IMR-90 (cell line): ENCODE measurements at regions of chr3 and their contacts with region 1.

Region 1: GRCh38 chr3:101195951-101196713 is 124.2 kb downstream of the IMPG2 start:
- DNase-seq: peak; percentile 72
- ATAC-seq: peak; percentile 71
- H3K4me3 ChIP-seq: no peak overlapping the region
- H3K27ac ChIP-seq: no peak overlapping the region
- H3K4me1 ChIP-seq: no peaks in the 10 kb centered on the region; the same call in 1 of the 2 replicates
- H3K27me3 ChIP-seq: 0 out of 2 replicates have a peak, but pooled peaks cover 1% of the 10 kb centered on the region
- CTCF ChIP-seq: peak; percentile 81
- POLR2A ChIP-seq: 0 out of 2 replicates have a peak, but pooled peaks have one; percentile 27
- RAD21 ChIP-seq: peak; percentile 87

Region 2: GRCh38 chr3:100316641-100317069 is 879.5 kb before region 1 on chr3:
- CTCF ChIA-PET with region 1: no interaction called
- POLR2A ChIA-PET with region 1: no interaction called
- dilution Hi-C with region 1: no loop called
- in situ Hi-C with region 1: no loop called
- intact Hi-C with region 1: loop called (anchors 10 kb)
- DNase-seq: peak; percentile 68
- ATAC-seq: peak; percentile 94
- H3K4me3 ChIP-seq: no peak overlapping the region
- H3K27ac ChIP-seq: peak overlapping the region; percentile 45; the same call in 1 of the 2 replicates
- H3K4me1 ChIP-seq: 0 out of 2 replicates have a peak, but pooled peaks cover 2% of the 10 kb centered on the region
- H3K27me3 ChIP-seq: no peaks in the 10 kb centered on the region
- CTCF ChIP-seq: peak; percentile 70
- POLR2A ChIP-seq: no peak
- RAD21 ChIP-seq: peak; percentile 74

Region 3: DNA sequence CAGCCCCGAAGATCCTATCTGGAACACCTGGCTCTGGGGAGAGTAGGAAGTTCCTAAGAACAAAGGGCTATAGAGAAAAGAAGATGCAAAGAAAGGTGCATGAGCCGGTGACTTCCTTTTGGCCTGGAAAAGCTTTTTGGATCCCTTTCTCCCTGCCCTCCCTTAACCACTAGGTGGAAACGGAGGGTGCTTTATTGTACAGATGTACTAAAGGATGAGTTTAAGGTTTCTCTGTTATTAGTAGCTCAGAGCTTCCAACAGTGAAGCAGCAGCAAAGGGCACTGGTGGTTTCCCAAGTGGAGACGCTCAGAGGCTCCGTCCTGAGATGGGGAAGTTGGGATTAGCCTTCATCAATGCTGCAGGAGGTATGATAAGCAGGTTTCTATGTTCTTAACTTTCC is 592.7 kb before region 1 on chr3:
- CTCF ChIA-PET with region 1: no interaction called
- POLR2A ChIA-PET with region 1: no interaction called
- dilution Hi-C with region 1: no loop called
- in situ Hi-C with region 1: no loop called
- intact Hi-C with region 1: loop called (anchors 5 kb)
- DNase-seq: peak; percentile 54
- ATAC-seq: peak; percentile 82
- H3K4me3 ChIP-seq: no peak overlapping the region
- H3K27ac ChIP-seq: no peak overlapping the region
- H3K4me1 ChIP-seq: no peaks in the 10 kb centered on the region; the same call in 1 of the 2 replicates
- H3K27me3 ChIP-seq: peaks cover under 1% of the 10 kb centered on the region; the same call in 1 of the 2 replicates
- CTCF ChIP-seq: peak; percentile 52
- POLR2A ChIP-seq: no peak
- RAD21 ChIP-seq: peak; percentile 55

Region 4: GRCh38 chr3:100754563-100755334 is 441.4 kb before region 1 on chr3:
- CTCF ChIA-PET with region 1: no interaction called
- POLR2A ChIA-PET with region 1: no interaction called
- dilution Hi-C with region 1: no loop called
- in situ Hi-C with region 1: no loop called
- intact Hi-C with region 1: loop called (anchors 5 kb)
- DNase-seq: no peak
- ATAC-seq: no peak
- H3K4me3 ChIP-seq: no peak overlapping the region
- H3K27ac ChIP-seq: no peak overlapping the region
- H3K4me1 ChIP-seq: peaks cover 2% of the 10 kb centered on the region; the same call in 1 of the 2 replicates
- H3K27me3 ChIP-seq: no peaks in the 10 kb centered on the region
- CTCF ChIP-seq: 0 out of 2 replicates have a peak, but pooled peaks have one; percentile 16
- POLR2A ChIP-seq: no peak
- RAD21 ChIP-seq: peak; percentile 39

Region 5: DNA sequence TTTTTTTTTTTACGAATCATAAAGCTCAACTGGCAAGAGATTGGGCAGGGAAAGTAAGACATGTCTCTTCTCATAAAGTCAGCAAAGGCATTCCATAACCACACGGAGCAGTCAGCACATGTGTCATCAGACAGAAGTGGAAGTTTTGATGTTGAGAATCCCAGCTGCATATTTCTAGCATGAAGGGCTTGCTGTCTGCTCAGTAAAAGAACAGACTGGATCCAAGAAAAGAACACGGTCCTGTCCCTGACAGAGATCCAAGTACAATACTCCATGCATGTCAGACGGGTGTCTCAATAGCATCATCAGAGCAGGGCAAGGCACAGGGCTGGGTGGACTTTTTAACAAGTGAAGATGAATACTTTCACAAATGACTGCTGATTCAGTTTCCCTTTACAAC is 241.1 kb before region 1 on chr3:
- CTCF ChIA-PET with region 1: no interaction called
- POLR2A ChIA-PET with region 1: no interaction called
- dilution Hi-C with region 1: no loop called
- in situ Hi-C with region 1: no loop called
- intact Hi-C with region 1: loop called (anchors 5 kb)
- DNase-seq: peak; percentile 97
- ATAC-seq: peak; percentile 97
- H3K4me3 ChIP-seq: peak overlapping the region; percentile 25; the same call in 1 of the 2 replicates
- H3K27ac ChIP-seq: peak overlapping the region; percentile 14; the same call in 1 of the 2 replicates
- H3K4me1 ChIP-seq: peaks cover 1% of the 10 kb centered on the region; the same call in 1 of the 2 replicates
- H3K27me3 ChIP-seq: no peaks in the 10 kb centered on the region
- CTCF ChIP-seq: 0 out of 2 replicates have a peak, but pooled peaks have one; percentile 4
- POLR2A ChIP-seq: no peak
- RAD21 ChIP-seq: no peak; the same call in 1 of the 2 replicates

Region 6: DNA sequence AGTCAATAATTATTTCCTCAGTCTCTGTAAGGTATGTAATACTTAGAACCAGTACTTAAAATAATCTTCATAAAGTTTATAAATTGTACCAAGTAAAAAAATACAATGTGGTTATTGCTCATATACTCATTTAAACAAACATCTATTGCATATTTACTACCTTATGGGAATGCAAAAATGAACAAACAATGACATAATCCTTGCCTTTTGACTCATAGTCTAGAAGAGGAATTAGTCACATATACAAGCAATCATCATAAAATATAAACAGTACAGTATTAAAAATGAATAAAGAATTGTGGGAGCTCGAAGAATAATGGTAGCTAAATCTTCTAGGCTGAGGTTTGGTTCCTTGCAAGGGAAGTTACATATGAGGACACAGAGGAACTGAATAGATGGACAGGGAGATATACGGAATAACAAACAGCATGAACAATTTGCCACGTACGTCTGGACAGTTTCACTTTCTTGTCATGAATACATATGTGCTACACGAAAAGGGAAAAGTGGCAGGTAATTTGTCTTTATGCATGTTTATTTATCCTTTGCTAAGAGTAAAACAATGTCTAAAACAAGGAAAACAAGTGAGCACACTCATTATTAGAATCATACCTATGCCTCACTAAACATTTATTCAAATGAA is 107.1 kb after region 1 on chr3:
- CTCF ChIA-PET with region 1: no interaction called
- POLR2A ChIA-PET with region 1: no interaction called
- dilution Hi-C with region 1: no loop called
- in situ Hi-C with region 1: no loop called
- intact Hi-C with region 1: no loop called
- DNase-seq: peak; percentile 91
- ATAC-seq: peak; percentile 85
- H3K4me3 ChIP-seq: peak overlapping the region; percentile 40; the same call in 1 of the 2 replicates
- H3K27ac ChIP-seq: peak overlapping the region; percentile 69; the same call in 1 of the 2 replicates
- H3K4me1 ChIP-seq: no peaks in the 10 kb centered on the region
- H3K27me3 ChIP-seq: no peaks in the 10 kb centered on the region
- CTCF ChIP-seq: no peak
- POLR2A ChIP-seq: no peak
- RAD21 ChIP-seq: no peak

Region 7: DNA sequence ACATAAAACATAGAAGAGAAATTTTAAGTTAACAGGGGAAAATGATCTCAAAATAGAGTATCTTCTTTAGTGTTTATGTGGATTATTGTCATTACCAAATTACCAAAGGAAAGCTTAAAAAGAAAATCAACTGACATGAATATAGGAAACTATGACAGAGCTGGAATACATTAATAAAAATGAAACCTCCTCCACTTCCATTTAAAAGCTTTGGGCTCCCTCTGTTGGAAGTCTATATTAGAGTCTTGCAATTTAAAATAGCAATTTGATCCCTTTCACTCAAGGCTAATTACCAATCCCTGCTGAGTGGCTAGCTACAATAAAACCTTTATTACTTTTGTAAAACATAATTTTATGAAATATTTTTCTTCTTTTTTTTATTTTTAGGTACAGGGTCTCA is 185.7 kb after region 1 on chr3:
- CTCF ChIA-PET with region 1: interaction called, 3 read pairs
- POLR2A ChIA-PET with region 1: no interaction called
- dilution Hi-C with region 1: no loop called
- in situ Hi-C with region 1: no loop called
- intact Hi-C with region 1: loop called (anchors 2 kb)
- DNase-seq: peak; percentile 58
- ATAC-seq: 0 out of 2 replicates have a peak, but pooled peaks have one; percentile 35
- H3K4me3 ChIP-seq: no peak overlapping the region
- H3K27ac ChIP-seq: no peak overlapping the region
- H3K4me1 ChIP-seq: peaks cover 5% of the 10 kb centered on the region
- H3K27me3 ChIP-seq: no peaks in the 10 kb centered on the region
- CTCF ChIP-seq: peak; percentile 69
- POLR2A ChIP-seq: no peak
- RAD21 ChIP-seq: peak; percentile 75